Body of pancreas (tissue), 4 donors: ENCODE measurements at regions of chr14 and their contacts with region 1.

Region 1: GRCh38 chr14:102437997-102438915 is 71.3 kb downstream of the ANKRD9 start:
- DNase-seq: peak; percentile 83 to 88 (median 86)
- ATAC-seq: peak; percentile 92
- H3K4me3 ChIP-seq: no peak overlapping the region
- H3K27ac ChIP-seq: no peak overlapping the region
- H3K4me1 ChIP-seq: peaks cover 6% of the 10 kb centered on the region
- H3K27me3 ChIP-seq: no peaks in the 10 kb centered on the region
- CTCF ChIP-seq: peak; percentile 53 to 81 (median 66)
- POLR2A ChIP-seq: no peak

Region 2: DNA sequence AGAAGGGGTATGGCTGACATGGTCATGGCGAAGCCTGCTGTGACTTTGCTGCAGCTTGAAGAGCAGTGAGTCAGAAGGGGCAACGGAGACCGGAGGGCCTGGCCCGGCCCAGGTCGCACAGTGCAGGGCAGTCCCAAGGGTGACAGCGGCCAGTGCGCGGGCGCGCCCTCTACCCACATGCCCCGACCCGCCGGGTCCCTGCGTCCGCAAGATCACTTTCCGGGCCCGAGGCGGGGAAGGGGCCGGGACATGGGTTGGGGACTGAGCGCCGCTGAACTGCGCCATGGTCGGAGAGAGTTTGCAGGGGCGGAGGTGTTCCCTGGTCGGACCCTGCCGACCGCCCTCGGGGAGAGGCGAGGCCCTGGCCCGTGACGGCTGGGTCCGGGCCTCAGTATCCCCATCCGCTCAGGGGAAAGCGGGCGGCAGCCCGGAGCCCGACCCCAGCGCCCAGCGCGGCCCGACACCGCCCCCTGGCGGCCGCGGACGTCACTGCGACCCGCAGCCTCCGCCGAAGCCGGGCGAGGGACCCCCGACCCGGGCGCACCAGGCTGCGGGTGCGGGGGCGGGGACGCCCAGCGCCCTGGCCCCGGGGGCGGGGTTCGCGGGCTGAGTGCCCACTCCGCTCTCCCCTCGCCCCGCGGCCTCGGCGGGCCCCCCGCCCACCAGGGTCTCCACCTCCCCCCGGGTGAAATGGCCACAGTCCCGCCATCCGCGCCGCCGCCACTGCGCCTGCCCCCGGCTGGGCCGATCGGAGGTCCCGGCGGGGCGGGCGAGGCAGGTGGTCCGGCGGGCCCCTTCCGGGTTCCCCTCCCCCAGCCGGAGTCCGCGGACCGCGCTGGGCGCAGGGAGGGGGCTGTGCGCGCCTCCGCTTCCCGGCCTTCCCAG is 78.5 kb after region 1 on chr14:
- intact Hi-C with region 1: loop called (anchors 5 kb)
- DNase-seq: peak; percentile 40 to 65 (median 60)
- ATAC-seq: peak; percentile 87
- H3K4me3 ChIP-seq: peak overlapping the region; percentile 54 to 74
- H3K27ac ChIP-seq: peak overlapping the region in 3 of 4 donors; percentile 37 to 67 (median 60)
- H3K4me1 ChIP-seq: peaks cover 7% of the 10 kb centered on the region
- H3K27me3 ChIP-seq: no peaks in the 10 kb centered on the region
- CTCF ChIP-seq: peak; percentile 39 to 100 (median 94)
- POLR2A ChIP-seq: no peak